Mammary epithelial cell (primary cell): ENCODE measurements at regions of chr19 and their contacts with region 1.

Region 1: GRCh38 chr19:48044561-48044960 is 682 bp upstream of the CABP5 start:
- DNase-seq: no peak
- H3K4me3 ChIP-seq: no peak overlapping the region
- H3K27ac ChIP-seq: no peak overlapping the region
- H3K4me1 ChIP-seq: no peaks in the 10 kb centered on the region
- H3K27me3 ChIP-seq: no peaks in the 10 kb centered on the region
- CTCF ChIP-seq: no peak

Region 2: DNA sequence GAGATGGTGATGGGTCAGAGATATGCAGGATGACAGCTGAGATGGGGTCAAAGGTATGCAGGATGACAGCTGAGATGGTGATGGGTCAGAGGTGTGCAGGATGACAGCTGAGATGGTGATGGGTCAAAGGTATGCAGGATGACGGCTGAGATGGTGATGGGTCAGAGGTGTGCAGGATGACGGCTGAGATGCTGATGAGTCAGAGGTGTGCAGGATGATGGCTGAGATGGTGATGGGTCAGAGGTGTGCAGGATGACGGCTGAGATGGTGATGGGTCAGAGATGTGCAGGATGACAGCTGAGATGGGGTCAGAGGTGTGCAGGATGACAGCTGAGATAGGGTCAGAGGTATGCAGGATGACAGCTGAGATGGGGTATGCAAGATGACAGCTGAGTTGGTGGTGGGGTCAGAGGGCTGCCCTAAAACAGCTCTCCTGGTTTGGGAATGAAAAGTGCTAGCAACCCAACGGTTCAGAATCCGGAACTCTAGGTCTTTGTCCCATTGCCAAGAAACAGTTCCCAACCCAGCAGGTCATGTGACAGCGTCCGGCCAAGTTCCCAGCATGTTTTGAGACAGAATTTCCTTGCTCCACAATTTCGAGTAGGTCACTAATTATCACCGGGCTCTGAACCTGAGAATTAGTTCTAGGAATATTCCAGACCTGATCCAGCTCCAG is 262.8 kb before region 1 on chr19:
- CTCF ChIA-PET with region 1: no interaction called
- dilution Hi-C with region 1: no loop called
- in situ Hi-C with region 1: no loop called
- intact Hi-C with region 1: no loop called
- DNase-seq: no peak
- H3K4me3 ChIP-seq: no peak overlapping the region
- H3K27ac ChIP-seq: no peak overlapping the region
- H3K4me1 ChIP-seq: peaks cover 5% of the 10 kb centered on the region
- H3K27me3 ChIP-seq: no peaks in the 10 kb centered on the region
- CTCF ChIP-seq: no peak

Region 3: GRCh38 chr19:47848823-47849473 is 195.6 kb before region 1 on chr19:
- CTCF ChIA-PET with region 1: no interaction called
- dilution Hi-C with region 1: no loop called
- in situ Hi-C with region 1: loop called in 1 of 2 experiments (anchors 25 kb)
- intact Hi-C with region 1: no loop called
- DNase-seq: no peak
- H3K4me3 ChIP-seq: no peak overlapping the region
- H3K27ac ChIP-seq: no peak overlapping the region
- H3K4me1 ChIP-seq: no peaks in the 10 kb centered on the region
- H3K27me3 ChIP-seq: no peaks in the 10 kb centered on the region
- CTCF ChIP-seq: peak in 1 of 2 donors; percentile 13

Region 4: GRCh38 chr19:47891923-47892666 is 152.5 kb before region 1 on chr19:
- CTCF ChIA-PET with region 1: no interaction called
- dilution Hi-C with region 1: no loop called
- in situ Hi-C with region 1: loop called in 1 of 2 experiments (anchors 25 kb)
- intact Hi-C with region 1: no loop called
- DNase-seq: no peak
- H3K4me3 ChIP-seq: no peak overlapping the region
- H3K27ac ChIP-seq: no peak overlapping the region
- H3K4me1 ChIP-seq: no peaks in the 10 kb centered on the region
- H3K27me3 ChIP-seq: no peaks in the 10 kb centered on the region
- CTCF ChIP-seq: no peak

Region 5: DNA sequence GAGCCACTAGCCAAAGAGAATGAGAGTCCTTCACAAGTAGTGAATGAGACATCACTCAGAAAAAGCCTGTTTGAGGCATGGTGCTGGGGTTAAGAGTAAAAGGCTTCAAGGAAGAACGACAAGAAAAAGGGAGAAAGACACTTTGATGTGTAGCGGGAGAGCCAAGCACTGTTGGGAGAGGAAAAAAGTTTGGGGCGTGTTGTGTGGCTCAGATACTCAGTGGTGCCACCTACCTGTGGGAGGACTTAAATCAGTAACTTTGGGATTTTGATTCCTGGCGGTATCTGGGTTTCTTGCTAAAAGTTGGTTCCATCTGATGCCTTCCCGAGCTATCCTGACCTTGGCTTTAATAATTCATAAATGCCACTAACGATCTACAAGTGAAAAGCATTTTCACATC is 37.8 kb before region 1 on chr19:
- CTCF ChIA-PET with region 1: no interaction called
- dilution Hi-C with region 1: loop called (anchors 5 kb)
- in situ Hi-C with region 1: no loop called
- intact Hi-C with region 1: no loop called
- DNase-seq: no peak
- H3K4me3 ChIP-seq: no peak overlapping the region
- H3K27ac ChIP-seq: no peak overlapping the region
- H3K4me1 ChIP-seq: no peaks in the 10 kb centered on the region
- H3K27me3 ChIP-seq: no peaks in the 10 kb centered on the region
- CTCF ChIP-seq: peak; percentile 7 to 14